Posterior cingulate gyrus (tissue), 11 donors: ENCODE measurements at regions of chr2 and their contacts with region 1.

Region 1: DNA sequence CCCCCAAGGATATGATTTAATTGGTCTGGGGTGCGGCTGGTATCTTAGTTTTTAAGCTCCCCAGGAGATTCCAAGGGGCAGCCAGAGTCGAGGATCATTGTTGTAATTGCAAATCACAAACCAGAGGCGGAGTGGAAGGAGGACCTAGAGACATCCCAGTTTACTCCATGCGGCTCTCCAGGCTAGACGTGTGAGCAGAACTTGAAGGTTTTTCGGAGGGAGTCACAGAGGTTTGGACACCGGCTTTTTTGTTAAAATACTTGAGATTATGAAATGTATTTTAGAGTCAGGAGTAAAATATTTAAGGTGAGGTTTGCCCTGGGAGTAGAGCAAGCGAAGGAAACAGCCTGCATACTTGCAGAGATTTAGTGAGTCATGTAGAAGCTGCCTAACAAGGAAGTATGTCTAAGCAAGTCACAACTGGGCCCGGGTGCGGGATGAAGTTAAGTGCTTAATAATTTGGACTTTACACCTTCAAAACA is 39.5 kb downstream of the TGOLN2 start:
- DNase-seq: no peak

Region 2: GRCh38 chr2:85066874-85067351 is 221.4 kb before region 1 on chr2:
- intact Hi-C with region 1: loop called (anchors 1 kb)
- DNase-seq: peak in 9 of 10 donors; percentile 40 to 94 (median 67)

Region 3: DNA sequence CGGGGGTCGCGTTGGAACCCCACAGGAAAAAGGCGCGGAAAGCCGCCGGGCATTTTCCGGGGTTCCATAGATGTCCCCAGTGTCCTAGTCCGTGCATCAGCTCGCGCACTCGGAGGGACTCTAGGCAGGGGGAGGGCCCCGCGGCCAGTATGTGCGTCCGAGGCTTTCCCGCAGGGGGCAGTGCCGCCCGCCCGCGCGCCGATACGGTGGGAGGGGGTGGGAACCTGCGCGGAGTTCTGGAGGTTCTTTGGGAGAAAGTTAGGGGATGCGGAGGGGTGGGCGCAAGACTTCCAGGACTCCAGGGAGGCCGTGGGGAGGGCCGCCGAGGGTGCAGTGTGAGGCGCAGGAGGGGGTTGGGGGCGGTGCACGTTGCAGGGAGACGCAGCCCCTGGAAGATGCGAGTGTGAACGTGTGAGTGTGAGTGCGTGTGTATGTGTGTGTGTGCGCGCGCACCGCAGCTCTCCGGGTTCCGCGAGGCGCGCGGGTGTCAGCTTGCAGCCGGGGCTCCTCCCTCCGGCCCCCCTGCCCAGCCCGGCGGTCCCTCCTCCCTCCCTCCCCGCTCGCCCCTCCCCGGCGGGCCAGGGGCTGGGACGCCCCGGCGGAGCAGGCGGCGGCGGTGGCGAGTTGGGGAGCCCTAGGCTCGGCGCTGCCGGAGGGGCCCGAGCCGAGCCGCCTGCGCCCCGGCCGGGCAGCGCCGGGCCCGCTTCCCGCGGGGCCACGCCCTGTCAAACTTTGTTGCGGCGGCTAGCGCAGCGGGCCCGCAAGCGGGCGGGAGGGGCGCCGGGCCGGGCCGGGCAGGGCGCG is 155.2 kb before region 1 on chr2 and contains the start of gene TCF7L1:
- intact Hi-C with region 1: loop called (anchors 2 kb)
- DNase-seq: peak; percentile 34 to 91 (median 52)

Region 4: DNA sequence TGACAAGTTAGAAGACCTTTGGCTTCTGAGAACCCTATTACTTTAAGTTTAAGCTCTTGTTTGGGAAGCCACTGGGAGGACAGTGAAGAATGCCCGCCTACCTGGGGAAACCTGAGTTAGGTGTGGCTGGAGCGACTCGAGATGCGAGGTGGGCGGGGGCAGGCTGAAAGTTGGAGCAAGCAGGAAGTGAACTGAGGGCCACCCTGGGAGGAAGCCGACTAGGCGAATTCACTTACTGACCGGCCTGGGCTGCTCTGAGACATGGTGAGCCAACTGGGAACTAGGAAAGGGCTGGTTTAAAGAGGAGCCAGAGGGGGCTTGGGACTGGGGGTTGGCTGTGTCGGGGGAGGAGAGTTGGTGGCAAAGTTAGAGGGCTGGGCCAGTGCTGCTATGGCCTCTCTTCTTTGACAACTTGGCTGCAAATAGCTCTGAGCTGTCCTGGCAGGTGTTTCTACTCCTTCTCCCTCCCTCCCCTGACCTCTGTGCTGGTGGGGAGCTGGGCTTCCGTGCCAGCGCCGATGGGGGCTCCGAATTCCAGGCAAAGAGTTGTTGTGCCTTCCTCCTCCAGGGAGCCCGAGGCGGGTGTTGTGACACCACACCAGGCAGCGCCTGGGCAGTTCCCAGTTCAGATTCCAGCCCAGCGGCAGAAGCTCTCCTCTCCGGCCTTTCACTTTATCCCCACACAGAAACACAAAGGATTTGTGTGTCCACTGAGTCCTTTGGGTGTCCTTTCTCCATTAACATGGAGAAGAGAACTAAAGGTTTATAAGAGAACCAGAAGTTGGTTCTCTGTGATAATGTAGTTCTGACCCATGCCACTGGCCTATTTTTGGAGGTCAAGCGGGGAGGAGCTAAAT is 289.3 kb after region 1 on chr2 and contains the start of gene VAMP8:
- intact Hi-C with region 1: no loop called
- DNase-seq: peak in 1 of 10 donors; percentile 74